ENCODE measurements at regions of chr3 and their contacts with region 1.

Region 1: DNA sequence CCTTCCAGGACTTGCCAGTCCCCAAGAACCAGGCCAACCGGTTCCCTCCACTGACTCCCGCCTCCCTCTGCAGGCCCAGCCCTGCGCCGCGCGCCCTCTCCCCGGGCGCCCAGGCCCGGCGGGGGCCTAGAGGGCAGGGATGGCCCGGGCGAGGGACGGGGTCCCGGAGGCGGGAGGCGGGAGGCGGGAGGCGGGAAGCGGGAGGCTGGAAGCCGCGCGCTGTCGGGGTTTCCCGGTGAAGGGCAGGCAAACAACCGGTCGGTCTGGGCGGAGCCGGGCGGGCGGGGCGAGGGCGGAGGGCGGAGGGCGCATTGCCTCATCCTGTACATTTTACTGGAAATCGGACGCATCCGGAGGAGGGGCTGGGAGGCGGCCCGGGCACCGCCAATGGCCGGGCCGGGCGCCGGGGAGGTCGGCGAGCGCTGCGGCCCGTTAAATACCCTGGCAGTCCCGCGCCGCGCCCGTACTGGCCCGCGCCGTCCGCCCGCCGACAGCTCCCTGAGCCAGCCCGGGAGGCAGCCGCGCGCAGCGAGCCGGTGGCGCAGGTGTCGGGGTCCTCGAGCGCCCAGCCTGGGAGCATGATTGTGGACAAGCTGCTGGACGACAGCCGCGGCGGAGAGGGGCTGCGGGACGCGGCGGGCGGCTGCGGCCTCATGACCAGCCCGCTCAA is at the start of gene NFKBIZ:
- DNase-seq: peak; percentile 97
- H3K4me3 Mint-ChIP-seq: peak within 1 kb of the TSS; percentile 98
- H3K27ac Mint-ChIP-seq: peak within 1 kb of the TSS; percentile 100
- H3K4me1 Mint-ChIP-seq: peaks cover 39% of the 10 kb centered on the region
- H3K27me3 Mint-ChIP-seq: no peaks in the 10 kb centered on the region
- total RNA-seq, gene NFKBIZ: 79.3 to 85.0 TPM

Region 2: GRCh38 chr3:101518421-101518871 is 330.7 kb before region 1 on chr3:
- CTCF ChIA-PET with region 1: no interaction called
- intact Hi-C with region 1: loop called (anchors 5 kb)
- DNase-seq: peak; percentile 71
- H3K4me3 Mint-ChIP-seq: peak overlapping the region; percentile 73
- H3K27ac Mint-ChIP-seq: peak overlapping the region; percentile 97
- H3K4me1 Mint-ChIP-seq: peaks cover 61% of the 10 kb centered on the region
- H3K27me3 Mint-ChIP-seq: no peaks in the 10 kb centered on the region

Region 3: GRCh38 chr3:101779047-101779821 is 70.0 kb before region 1 on chr3 and contains the start of gene NXPE3:
- CTCF ChIA-PET with region 1: no interaction called
- intact Hi-C with region 1: loop called (anchors 1 kb)
- DNase-seq: peak; percentile 96
- H3K4me3 Mint-ChIP-seq: peak within 1 kb of the TSS; percentile 95
- H3K27ac Mint-ChIP-seq: peak within 1 kb of the TSS; percentile 96
- H3K4me1 Mint-ChIP-seq: peaks cover 49% of the 10 kb centered on the region
- H3K27me3 Mint-ChIP-seq: no peaks in the 10 kb centered on the region
- total RNA-seq, gene NXPE3: 18.9 to 19.3 TPM

Region 4: GRCh38 chr3:101861212-101861788 is 12.1 kb after region 1 on chr3:
- CTCF ChIA-PET with region 1: interaction called, 4 read pairs
- intact Hi-C with region 1: loop called (anchors 1 kb)
- DNase-seq: no peak
- H3K4me3 Mint-ChIP-seq: no peak overlapping the region
- H3K27ac Mint-ChIP-seq: peak overlapping the region; percentile 28
- H3K4me1 Mint-ChIP-seq: peaks cover 56% of the 10 kb centered on the region
- H3K27me3 Mint-ChIP-seq: no peaks in the 10 kb centered on the region

Region 5: GRCh38 chr3:101936419-101937356 is 87.5 kb after region 1 on chr3:
- CTCF ChIA-PET with region 1: interaction called, 3 read pairs
- intact Hi-C with region 1: loop called (anchors 1 kb)
- DNase-seq: peak; percentile 33
- H3K4me3 Mint-ChIP-seq: peak overlapping the region; percentile 0
- H3K27ac Mint-ChIP-seq: peak overlapping the region; percentile 57
- H3K4me1 Mint-ChIP-seq: peaks cover 32% of the 10 kb centered on the region
- H3K27me3 Mint-ChIP-seq: peaks cover 2% of the 10 kb centered on the region

Region 6: GRCh38 chr3:102089904-102090492 is 240.8 kb after region 1 on chr3:
- CTCF ChIA-PET with region 1: interaction called, 3 read pairs
- intact Hi-C with region 1: loop called (anchors 1 kb)
- DNase-seq: no peak
- H3K4me3 Mint-ChIP-seq: no peak overlapping the region
- H3K27ac Mint-ChIP-seq: no peak overlapping the region
- H3K4me1 Mint-ChIP-seq: peaks cover 44% of the 10 kb centered on the region
- H3K27me3 Mint-ChIP-seq: no peaks in the 10 kb centered on the region

Region 7: GRCh38 chr3:102124301-102125158 is 275.3 kb after region 1 on chr3:
- CTCF ChIA-PET with region 1: no interaction called
- intact Hi-C with region 1: no loop called
- DNase-seq: no peak
- H3K4me3 Mint-ChIP-seq: no peak overlapping the region
- H3K27ac Mint-ChIP-seq: no peak overlapping the region
- H3K4me1 Mint-ChIP-seq: peaks cover 3% of the 10 kb centered on the region
- H3K27me3 Mint-ChIP-seq: no peaks in the 10 kb centered on the region